Activated B cell treated with CpG ODN at 0.5 μM for 24 hours (primary cell): ENCODE measurements at regions of chr22 and their contacts with region 1.

Region 1: DNA sequence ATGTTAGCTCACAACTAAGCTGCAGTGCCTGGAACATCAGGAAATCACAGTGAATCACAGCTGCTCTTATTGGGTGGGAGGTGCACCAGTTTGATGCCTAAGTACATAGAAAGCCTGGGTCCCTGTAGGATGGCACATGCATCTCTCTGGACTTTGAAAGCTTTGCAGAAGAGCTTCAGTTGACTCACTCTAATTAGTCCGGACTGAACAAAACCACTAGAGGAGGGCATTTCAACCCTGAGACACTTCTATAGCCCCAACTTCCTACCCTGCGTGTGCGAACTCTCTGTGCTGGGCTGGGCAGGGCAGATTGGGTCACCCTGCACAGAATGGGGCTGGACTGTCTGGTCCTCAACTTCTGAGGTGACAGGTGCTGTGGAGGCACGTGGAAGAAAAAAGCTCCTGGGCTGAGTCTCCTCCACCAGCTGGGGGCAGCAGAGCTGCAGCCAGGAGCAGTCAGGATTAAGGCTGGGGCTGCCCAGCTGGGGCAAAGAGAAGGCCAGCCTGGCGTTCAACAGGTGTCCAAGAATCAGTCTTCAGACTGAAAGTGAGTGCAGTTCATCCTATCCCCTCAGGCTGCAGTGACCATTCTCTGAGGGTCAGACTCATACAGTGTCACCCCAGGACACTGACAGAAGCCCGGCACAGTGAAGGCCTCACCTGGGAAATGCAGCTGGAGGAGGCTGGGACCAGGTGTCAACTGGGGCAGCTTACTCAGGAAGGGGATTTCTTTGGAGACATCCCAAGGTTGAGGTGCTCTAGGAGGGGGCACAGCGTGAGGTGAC is 22.1 kb downstream of the GGTLC2 start:
- DNase-seq: peak; percentile 30
- ATAC-seq: peak; percentile 82
- H3K4me3 Mint-ChIP-seq: no peak overlapping the region
- H3K27ac Mint-ChIP-seq: no peak overlapping the region
- H3K4me1 Mint-ChIP-seq: peaks cover 16% of the 10 kb centered on the region
- H3K27me3 Mint-ChIP-seq: peaks cover 2% of the 10 kb centered on the region
- CTCF ChIP-seq: no peak

Region 2: DNA sequence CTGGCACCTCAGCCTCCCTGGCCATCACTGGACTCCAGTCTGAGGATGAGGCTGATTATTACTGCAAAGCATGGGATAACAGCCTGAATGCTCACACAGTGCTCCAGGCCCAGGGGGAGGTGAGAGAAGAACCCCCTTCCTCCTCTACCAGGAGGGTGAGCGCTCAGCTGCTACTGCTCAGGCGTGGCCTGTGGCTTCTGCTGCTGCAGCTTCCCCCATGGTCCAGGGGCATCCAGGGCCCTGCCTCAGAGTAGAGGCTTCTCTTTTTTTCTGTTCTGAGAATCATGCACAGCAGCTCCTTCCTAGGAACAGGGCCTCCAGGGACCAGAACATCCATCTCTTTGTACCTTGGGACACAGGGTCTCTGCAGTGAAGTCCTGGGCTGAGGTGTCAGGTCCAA is 338.8 kb before region 1 on chr22:
- CTCF ChIA-PET with region 1: no interaction called
- POLR2A ChIA-PET with region 1: no interaction called
- intact Hi-C with region 1: no loop called
- DNase-seq: no peak
- ATAC-seq: peak; percentile 65
- H3K4me3 Mint-ChIP-seq: no peak overlapping the region
- H3K27ac Mint-ChIP-seq: no peak overlapping the region
- H3K4me1 Mint-ChIP-seq: peaks cover 41% of the 10 kb centered on the region
- H3K27me3 Mint-ChIP-seq: peaks cover 6% of the 10 kb centered on the region
- CTCF ChIP-seq: no peak

Region 3: GRCh38 chr22:22593964-22594656 is 72.4 kb before region 1 on chr22:
- CTCF ChIA-PET with region 1: interaction called, 7 read pairs
- POLR2A ChIA-PET with region 1: no interaction called
- intact Hi-C with region 1: loop called (anchors 1 kb)
- DNase-seq: peak; percentile 53
- ATAC-seq: peak; percentile 90
- H3K4me3 Mint-ChIP-seq: no peak overlapping the region
- H3K27ac Mint-ChIP-seq: peak overlapping the region; percentile 46
- H3K4me1 Mint-ChIP-seq: peaks cover 27% of the 10 kb centered on the region
- H3K27me3 Mint-ChIP-seq: no peaks in the 10 kb centered on the region
- CTCF ChIP-seq: no peak

Region 4: GRCh38 chr22:22692707-22693530 is 26.4 kb after region 1 on chr22:
- CTCF ChIA-PET with region 1: interaction called, 21 read pairs
- POLR2A ChIA-PET with region 1: no interaction called
- intact Hi-C with region 1: no loop called
- DNase-seq: peak; percentile 71
- ATAC-seq: peak; percentile 87
- H3K4me3 Mint-ChIP-seq: peak overlapping the region; percentile 55
- H3K27ac Mint-ChIP-seq: peak overlapping the region; percentile 65
- H3K4me1 Mint-ChIP-seq: peaks cover 40% of the 10 kb centered on the region
- H3K27me3 Mint-ChIP-seq: no peaks in the 10 kb centered on the region
- CTCF ChIP-seq: no peak